ENCODE measurements at regions of chr11 and their contacts with region 1.

Region 1: GRCh38 chr11:5737091-5737490 is 843 bp downstream of the OR56B1 start:
- DNase-seq: no peak
- ATAC-seq: no peak
- H3K4me3 ChIP-seq: no peak overlapping the region
- H3K27ac ChIP-seq: no peak overlapping the region
- H3K4me1 ChIP-seq: no peaks in the 10 kb centered on the region
- H3K27me3 ChIP-seq: peaks cover 87% of the 10 kb centered on the region
- CTCF ChIP-seq: no peak
- POLR2A ChIP-seq: no peak
- RAD21 ChIP-seq: no peak

Region 2: GRCh38 chr11:4891996-4892640 is 845.0 kb before region 1 on chr11:
- CTCF ChIA-PET with region 1: no interaction called
- POLR2A ChIA-PET with region 1: no interaction called
- RAD21 ChIA-PET with region 1: no interaction called
- intact Hi-C with region 1: no loop called
- DNase-seq: no peak
- ATAC-seq: peak; percentile 80
- H3K4me3 ChIP-seq: no peak overlapping the region
- H3K27ac ChIP-seq: no peak overlapping the region
- H3K4me1 ChIP-seq: peaks cover 0 to 6% of the 10 kb centered on the region in 2 experiments; a peak in 2 of 4 replicates
- H3K27me3 ChIP-seq: peaks cover 15% of the 10 kb centered on the region
- CTCF ChIP-seq: peak in 2 of 3 experiments; percentile 27 to 33; a peak in 2 of 6 replicates
- POLR2A ChIP-seq: no peak
- RAD21 ChIP-seq: no peak

Region 3: DNA sequence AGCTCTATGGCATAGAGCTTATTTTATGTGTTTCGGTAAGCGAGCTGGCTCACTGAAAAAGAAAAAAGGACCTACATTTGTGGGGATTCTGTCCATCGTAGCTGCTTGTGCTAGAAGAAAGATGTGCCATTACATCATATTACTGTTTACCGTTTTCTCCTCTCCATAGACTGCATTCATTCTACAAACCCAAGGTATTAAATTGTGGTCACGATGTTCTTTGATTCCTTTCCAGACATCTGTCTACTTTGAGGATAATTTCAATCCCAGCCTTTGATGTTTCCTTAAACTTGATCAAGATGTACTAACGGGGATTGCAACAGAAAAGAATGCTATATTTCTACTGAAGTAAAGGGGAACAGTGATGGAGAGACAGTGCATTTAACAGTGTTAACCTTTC is 59.5 kb after region 1 on chr11:
- CTCF ChIA-PET with region 1: no interaction called
- POLR2A ChIA-PET with region 1: no interaction called
- RAD21 ChIA-PET with region 1: no interaction called
- intact Hi-C with region 1: loop called (anchors 5 kb)
- DNase-seq: no peak
- ATAC-seq: no peak
- H3K4me3 ChIP-seq: no peak overlapping the region
- H3K27ac ChIP-seq: no peak overlapping the region
- H3K4me1 ChIP-seq: no peaks in the 10 kb centered on the region
- H3K27me3 ChIP-seq: peaks cover 53% of the 10 kb centered on the region
- CTCF ChIP-seq: no peak
- POLR2A ChIP-seq: no peak
- RAD21 ChIP-seq: no peak